Activated CD4-positive, alpha-beta memory T cell treated with anti-CD3 and anti-CD28 coated beads for 36 hours (primary cell): ENCODE measurements at regions of chr1 and their contacts with region 1.

Region 1: GRCh38 chr1:18902523-18903290 is at the start of gene ALDH4A1:
- DNase-seq: peak; percentile 97
- H3K4me3 Mint-ChIP-seq: peak within 1 kb of the TSS; percentile 89
- H3K27ac Mint-ChIP-seq: peak within 1 kb of the TSS; percentile 95
- H3K4me1 Mint-ChIP-seq: peaks cover 19% of the 10 kb centered on the region
- H3K27me3 Mint-ChIP-seq: no peaks in the 10 kb centered on the region
- total RNA-seq, gene ALDH4A1: 7.2 to 7.3 TPM

Region 2: DNA sequence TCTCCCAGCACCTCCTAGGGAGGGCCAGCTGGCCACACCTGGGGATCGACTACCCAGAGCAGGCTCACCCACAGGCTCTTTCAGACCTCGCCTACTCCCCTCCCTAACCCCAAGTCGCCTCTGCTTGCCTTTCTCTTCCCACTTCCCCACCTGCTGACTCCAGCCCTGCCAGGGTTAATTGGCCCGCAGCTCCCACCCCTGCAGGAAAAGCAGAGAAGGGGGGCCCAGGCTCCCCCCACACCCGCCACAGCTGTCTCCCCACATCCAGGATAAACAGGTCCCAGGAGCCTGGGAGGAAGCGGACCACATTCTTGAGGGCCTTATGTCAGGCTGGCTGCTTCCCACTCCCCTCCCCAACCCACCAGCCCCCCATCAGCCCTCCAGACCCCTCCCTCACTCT is 88.3 kb before region 1 on chr1:
- CTCF ChIA-PET with region 1: no interaction called
- POLR2A ChIA-PET with region 1: no interaction called
- intact Hi-C with region 1: no loop called
- DNase-seq: no peak
- H3K4me3 Mint-ChIP-seq: no peak overlapping the region
- H3K27ac Mint-ChIP-seq: no peak overlapping the region
- H3K4me1 Mint-ChIP-seq: no peaks in the 10 kb centered on the region
- H3K27me3 Mint-ChIP-seq: peaks cover 40% of the 10 kb centered on the region

Region 3: GRCh38 chr1:18926315-18927081 is 23.8 kb after region 1 on chr1:
- CTCF ChIA-PET with region 1: interaction called, 48 read pairs
- POLR2A ChIA-PET with region 1: interaction called, 14 read pairs
- intact Hi-C with region 1: loop called (anchors 2 kb)
- DNase-seq: peak; percentile 94
- H3K4me3 Mint-ChIP-seq: peak overlapping the region; percentile 79
- H3K27ac Mint-ChIP-seq: peak overlapping the region; percentile 100
- H3K4me1 Mint-ChIP-seq: peaks cover 79% of the 10 kb centered on the region
- H3K27me3 Mint-ChIP-seq: no peaks in the 10 kb centered on the region

Region 4: DNA sequence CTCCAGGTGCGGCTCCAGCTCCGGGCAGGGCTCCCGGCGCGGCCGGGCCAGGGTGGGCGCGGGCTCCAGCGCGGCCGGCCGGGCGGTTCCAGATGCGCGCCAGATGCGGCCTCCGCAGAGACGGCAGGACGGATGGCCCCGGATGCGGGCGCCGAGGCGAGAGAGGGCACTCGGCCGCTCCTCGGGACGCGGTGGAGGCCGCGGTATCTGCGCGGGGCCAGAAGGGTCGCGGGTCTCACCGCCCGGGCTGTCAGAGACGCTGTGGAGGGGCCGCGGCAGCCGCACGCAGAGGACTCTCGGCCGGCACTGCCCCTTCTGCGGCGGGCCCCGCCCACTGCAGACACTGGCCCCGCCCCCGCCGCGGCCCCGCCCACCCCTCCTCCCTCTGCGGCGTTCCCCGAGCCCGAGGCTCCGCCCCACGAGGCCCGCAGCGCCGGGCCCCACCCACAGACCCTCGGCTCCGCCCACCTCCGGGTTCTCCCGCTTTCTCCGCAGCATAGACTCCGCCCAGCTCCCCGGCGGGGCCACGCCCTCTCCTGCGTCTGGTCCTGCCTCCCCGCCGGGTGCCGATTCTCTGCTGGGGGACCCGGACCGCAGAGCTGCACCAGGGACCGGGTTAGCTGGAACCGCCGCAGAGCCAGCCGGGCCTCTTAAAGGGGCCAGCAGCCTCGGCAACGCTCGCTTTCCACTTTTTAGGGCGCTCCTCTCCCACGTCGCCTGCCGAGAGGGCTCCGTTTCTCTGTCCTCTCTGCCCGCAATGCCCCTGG is 53.8 kb after region 1 on chr1 and contains the start of gene IFFO2:
- CTCF ChIA-PET with region 1: interaction called, 55 read pairs
- POLR2A ChIA-PET with region 1: interaction called, 7 read pairs
- intact Hi-C with region 1: loop called (anchors 1 kb)
- DNase-seq: peak; percentile 98
- H3K4me3 Mint-ChIP-seq: peak within 1 kb of the TSS; percentile 84
- H3K27ac Mint-ChIP-seq: peak within 1 kb of the TSS; percentile 71
- H3K4me1 Mint-ChIP-seq: peaks cover 44% of the 10 kb centered on the region
- H3K27me3 Mint-ChIP-seq: peaks cover 2% of the 10 kb centered on the region
- total RNA-seq, gene IFFO2: 40.4 to 42.0 TPM

Region 5: GRCh38 chr1:19010995-19011844 is 108.5 kb after region 1 on chr1:
- CTCF ChIA-PET with region 1: interaction called, 10 read pairs
- POLR2A ChIA-PET with region 1: no interaction called
- intact Hi-C with region 1: loop called (anchors 2 kb)
- DNase-seq: peak; percentile 93
- H3K4me3 Mint-ChIP-seq: peak overlapping the region; percentile 31
- H3K27ac Mint-ChIP-seq: peak overlapping the region; percentile 91
- H3K4me1 Mint-ChIP-seq: peaks cover 38% of the 10 kb centered on the region
- H3K27me3 Mint-ChIP-seq: no peaks in the 10 kb centered on the region

Region 6: DNA sequence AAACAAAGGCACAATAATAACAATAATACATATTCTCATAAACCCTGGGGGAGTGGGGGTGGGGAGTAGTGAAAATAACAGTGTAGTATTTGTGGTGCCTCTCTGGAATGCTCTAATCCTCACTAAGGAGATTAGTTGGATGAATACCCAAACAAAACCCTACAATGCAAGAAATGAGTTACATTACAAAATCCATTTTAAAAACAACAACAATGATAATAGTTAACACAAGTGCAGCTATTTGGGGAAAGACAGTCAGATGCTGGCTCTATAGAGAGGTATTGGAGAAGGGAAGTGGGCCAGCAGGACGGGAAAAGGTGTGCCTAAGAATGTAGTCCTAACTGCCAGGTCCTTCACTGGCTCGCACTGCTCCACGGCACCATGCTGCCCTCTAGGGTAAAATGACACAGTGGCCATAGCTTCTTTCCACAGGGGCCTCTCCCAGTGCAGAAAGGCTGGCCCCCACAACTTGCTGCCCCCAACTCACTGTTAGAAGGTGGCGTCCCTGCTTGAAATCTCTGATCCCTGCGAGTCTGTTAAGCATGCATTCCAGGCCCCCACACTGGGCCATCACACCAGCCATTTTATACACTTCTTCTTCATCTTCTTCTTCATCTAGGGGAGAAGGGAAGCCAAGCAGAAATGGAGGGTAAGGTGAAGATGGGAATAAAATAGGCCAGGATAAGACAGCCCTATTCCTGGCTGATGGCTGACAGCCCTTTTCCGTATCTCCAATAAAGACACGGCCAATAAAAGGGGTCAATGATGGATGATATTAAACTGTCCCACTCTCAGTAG is 193.5 kb after region 1 on chr1:
- CTCF ChIA-PET with region 1: interaction called, 14 read pairs
- POLR2A ChIA-PET with region 1: no interaction called
- intact Hi-C with region 1: no loop called
- DNase-seq: peak; percentile 39
- H3K4me3 Mint-ChIP-seq: no peak overlapping the region
- H3K27ac Mint-ChIP-seq: no peak overlapping the region
- H3K4me1 Mint-ChIP-seq: no peaks in the 10 kb centered on the region
- H3K27me3 Mint-ChIP-seq: no peaks in the 10 kb centered on the region

Region 7: DNA sequence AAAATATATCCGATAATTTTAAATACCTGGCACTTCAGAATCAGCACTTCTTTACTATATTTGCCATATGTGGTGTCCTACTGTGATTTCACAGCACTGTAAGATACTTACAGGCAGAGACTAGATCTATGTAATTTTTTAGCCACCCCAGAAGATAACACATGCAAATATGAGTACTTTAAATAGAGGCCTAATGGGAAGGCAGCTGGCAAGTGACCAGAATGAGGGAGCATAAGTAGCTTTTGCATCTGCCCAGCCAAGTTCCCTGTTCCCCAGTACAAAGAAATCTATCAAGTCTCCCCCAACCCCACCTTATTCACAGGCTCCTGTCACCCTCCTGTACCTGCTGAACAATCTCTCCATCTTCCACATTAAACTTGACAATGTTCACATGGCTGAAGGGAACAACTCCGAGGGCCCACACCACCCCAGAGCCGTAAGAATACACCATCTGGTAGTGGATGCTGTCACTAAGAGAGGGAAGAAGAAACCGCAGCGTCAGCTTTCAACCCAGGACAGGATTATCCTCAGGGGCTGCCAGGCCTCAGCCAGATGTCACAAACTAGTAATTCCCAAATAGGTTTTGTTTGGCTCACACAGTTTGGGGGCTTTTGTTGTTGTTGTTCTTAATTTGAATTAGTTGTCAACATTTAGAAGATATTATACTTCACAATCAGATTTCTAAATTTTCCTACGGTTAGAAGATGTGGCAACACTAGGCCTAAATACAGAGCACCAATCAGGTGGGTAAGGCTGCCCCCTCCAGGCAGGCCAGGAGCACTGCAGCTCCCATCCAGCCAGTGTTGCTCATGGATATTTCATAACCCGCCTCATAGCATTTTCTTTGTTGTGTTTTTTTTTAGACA is 338.2 kb after region 1 on chr1:
- CTCF ChIA-PET with region 1: no interaction called
- POLR2A ChIA-PET with region 1: no interaction called
- intact Hi-C with region 1: loop called (anchors 10 kb)
- DNase-seq: peak; percentile 81
- H3K4me3 Mint-ChIP-seq: no peak overlapping the region
- H3K27ac Mint-ChIP-seq: no peak overlapping the region
- H3K4me1 Mint-ChIP-seq: no peaks in the 10 kb centered on the region
- H3K27me3 Mint-ChIP-seq: no peaks in the 10 kb centered on the region